Ascending aorta (tissue), 2 donors: ENCODE measurements at regions of chr15 and their contacts with region 1.

Region 1: GRCh38 chr15:51776952-51777574 is 25.7 kb downstream of the TMOD2 start:
- DNase-seq: peak in 1 of 2 donors; percentile 80
- H3K4me3 ChIP-seq: no peak overlapping the region
- H3K27ac ChIP-seq: no peak overlapping the region
- H3K4me1 ChIP-seq: no peaks in the 10 kb centered on the region
- H3K27me3 ChIP-seq: no peaks in the 10 kb centered on the region
- CTCF ChIP-seq: peak; percentile 2 to 73 (median 60)

Region 2: GRCh38 chr15:51649659-51650521 is 127.2 kb before region 1 on chr15:
- intact Hi-C with region 1: loop called (anchors 1 kb)
- DNase-seq: no peak
- H3K4me3 ChIP-seq: no peak overlapping the region
- H3K27ac ChIP-seq: no peak overlapping the region
- H3K4me1 ChIP-seq: no peaks in the 10 kb centered on the region
- H3K27me3 ChIP-seq: no peaks in the 10 kb centered on the region
- CTCF ChIP-seq: peak; percentile 49 to 74 (median 62)

Region 3: DNA sequence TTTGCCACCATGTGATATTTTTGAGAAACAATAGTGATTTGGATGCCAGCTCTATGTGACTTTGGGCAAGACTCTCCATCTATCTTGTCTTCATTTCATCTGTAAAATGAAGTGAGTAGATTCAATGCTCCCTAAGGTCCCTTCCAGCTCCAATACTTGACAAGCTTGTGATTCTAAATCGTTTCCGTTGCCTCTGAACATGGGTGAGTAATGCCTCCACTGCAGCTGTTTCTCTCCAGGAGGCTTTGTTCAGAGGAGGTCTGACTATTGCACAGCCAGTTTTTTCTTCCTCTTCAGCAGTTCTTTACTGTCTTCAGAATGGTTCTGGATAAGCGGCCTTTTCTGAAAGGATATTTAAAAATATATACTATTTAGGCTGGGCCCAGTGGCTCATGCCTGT is 37.5 kb after region 1 on chr15:
- intact Hi-C with region 1: no loop called
- DNase-seq: no peak
- H3K4me3 ChIP-seq: no peak overlapping the region
- H3K27ac ChIP-seq: no peak overlapping the region
- H3K4me1 ChIP-seq: no peaks in the 10 kb centered on the region
- H3K27me3 ChIP-seq: no peaks in the 10 kb centered on the region
- CTCF ChIP-seq: no peak